ENCODE measurements at regions of chr5 and their contacts with region 1.

Region 1: DNA sequence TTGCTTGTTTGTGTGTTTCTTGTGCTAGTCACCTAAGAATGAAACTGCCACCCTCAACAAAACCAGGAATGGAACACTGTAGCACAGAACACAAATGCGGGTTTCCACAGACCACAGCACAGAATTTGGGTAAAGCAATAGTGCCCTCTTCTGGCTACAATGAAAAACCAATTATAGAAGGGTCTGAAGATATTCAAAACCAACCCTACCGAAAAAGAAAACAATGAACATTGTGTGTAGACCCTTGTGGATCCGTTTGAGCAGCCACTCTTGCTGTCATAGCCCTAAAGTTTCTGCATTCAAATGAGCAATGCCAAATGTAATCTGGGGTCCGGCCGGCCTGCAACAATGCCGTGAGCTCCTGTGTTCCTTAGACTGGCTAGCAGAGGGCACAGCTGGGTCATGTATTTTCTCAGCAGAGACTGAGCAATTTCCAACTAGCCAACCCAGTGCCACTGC is 8.3 kb upstream of the ENC1 start:
- DNase-seq: no peak
- H3K4me3 ChIP-seq: no peak overlapping the region
- H3K27me3 ChIP-seq: no peaks in the 10 kb centered on the region
- CTCF ChIP-seq: peak; percentile 65

Region 2: DNA sequence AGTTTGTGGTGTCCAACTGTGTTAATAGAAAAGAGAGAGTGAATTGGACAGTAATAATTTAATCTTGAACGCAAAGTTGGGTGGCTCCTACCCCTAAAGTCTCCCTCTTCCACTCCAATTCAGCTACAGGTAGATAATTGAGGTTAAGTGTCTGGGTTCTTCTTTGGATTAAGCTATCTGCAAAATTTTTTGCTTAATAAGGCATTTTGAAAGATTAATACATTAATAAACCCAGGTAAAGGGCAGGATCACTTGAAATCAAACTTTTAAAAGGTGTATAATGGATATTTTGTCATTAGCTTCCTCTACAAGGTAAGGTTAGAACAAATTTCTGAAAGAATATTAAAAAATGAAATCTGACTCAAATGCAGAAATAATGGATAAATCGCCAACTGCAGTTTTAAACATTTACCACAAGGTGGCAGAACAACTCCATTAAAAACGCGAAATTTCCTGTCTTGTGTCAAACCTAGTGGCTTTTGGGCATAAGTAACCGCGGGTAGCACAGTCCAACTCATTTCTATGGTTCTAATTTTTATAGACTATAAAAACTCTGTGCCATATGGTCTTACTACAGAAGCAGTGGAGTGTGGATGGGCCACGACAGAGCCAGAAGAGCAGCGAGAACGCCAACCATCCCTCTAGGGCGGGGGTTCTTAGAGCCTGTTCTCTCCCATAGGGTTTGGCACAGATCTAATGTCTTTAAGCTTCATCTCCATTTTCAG is 746.4 kb before region 1 on chr5:
- CTCF ChIA-PET with region 1: interaction called, 38 read pairs
- POLR2A ChIA-PET with region 1: no interaction called
- DNase-seq: no peak
- H3K4me3 ChIP-seq: no peak overlapping the region
- H3K27me3 ChIP-seq: no peaks in the 10 kb centered on the region
- CTCF ChIP-seq: peak; percentile 58

Region 3: DNA sequence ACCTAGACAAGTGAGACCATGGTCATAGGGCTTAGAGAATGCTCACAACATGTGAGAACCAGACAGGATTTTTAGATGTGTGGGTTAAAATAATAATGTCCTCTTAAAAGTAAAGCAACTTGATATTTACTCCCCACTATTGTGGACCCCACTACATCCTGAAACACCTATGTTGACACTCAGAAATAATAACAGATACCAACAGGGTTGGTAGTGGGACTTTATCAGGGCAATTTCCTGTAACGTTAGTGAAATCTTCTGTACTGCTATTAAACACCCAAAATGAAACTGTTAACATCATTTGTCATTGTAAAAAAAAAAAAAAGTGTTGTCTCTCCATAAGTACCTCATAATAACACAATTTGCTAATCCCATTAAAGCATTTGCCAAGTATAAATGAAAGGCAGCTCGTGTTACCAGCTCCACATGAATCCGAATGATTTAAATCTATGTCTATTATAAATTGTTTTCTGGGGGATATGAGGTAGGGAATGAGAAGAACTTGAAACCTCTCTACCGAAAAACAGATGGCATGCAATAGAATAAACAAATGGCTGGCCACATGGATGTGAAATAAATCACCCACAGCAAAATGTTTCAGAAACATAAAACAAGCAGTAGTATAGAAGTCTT is 737.0 kb before region 1 on chr5:
- CTCF ChIA-PET with region 1: interaction called, 17 read pairs
- POLR2A ChIA-PET with region 1: no interaction called
- DNase-seq: no peak
- H3K4me3 ChIP-seq: no peak overlapping the region
- H3K27me3 ChIP-seq: no peaks in the 10 kb centered on the region
- CTCF ChIP-seq: no peak

Region 4: DNA sequence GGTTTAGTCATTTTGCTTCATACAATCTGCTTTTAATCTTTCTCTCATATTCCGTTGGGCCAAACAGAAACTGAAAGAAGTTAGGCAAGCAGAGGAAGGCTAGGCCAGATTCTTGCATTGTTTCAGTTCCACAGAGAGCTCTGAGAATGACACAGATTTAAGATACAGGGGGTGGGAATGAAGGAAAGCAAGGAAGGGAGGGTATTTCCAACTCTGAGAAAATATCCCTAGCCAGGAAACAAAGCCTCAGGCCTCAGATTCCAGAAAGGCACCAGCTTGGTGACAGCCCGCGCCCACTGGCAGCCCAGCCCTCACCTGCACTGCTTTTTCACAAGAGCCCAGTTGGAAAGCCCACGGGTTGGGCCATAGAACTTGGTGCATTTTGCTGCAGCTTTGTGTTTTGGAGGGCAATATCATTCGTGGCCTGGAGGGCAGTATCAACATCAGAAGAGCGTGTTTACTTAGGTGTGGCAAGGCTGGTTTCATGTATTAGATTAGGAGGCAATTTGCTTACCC is 71.9 kb before region 1 on chr5:
- CTCF ChIA-PET with region 1: no interaction called
- POLR2A ChIA-PET with region 1: no interaction called
- DNase-seq: peak; percentile 50
- H3K4me3 ChIP-seq: no peak overlapping the region
- H3K27me3 ChIP-seq: peaks cover under 1% of the 10 kb centered on the region; the same call in 1 of the 2 replicates
- CTCF ChIP-seq: no peak